ENCODE measurements at regions of chr5 and their contacts with region 1.

Region 1: DNA sequence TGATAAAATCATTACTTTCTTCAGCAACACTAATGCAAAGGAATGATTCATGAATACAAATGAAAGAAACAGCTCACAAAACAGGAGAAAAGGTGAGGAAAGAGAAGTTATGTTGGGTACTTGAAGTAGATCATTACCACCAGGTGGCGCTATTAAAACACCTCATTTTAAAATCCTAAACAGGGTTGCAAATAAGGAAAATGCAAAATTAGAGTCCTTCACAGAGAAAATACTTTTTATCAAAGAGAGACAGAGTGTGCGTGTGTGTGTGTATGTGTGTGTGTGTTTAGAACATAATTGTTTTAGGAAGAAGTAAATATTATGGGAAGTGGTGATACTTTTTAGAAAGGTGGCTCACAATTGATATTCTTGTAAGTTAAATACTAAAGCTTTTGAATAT is 49.5 kb upstream of the CD180 start:
- DNase-seq: peak in 1 of 3 donors; percentile 39
- ATAC-seq: peak; percentile 31 to 39
- H3K4me3 ChIP-seq: no peak overlapping the region
- H3K27ac ChIP-seq: no peak overlapping the region
- H3K4me1 ChIP-seq: peaks cover 9% of the 10 kb centered on the region
- H3K27me3 ChIP-seq: no peaks in the 10 kb centered on the region

Region 2: DNA sequence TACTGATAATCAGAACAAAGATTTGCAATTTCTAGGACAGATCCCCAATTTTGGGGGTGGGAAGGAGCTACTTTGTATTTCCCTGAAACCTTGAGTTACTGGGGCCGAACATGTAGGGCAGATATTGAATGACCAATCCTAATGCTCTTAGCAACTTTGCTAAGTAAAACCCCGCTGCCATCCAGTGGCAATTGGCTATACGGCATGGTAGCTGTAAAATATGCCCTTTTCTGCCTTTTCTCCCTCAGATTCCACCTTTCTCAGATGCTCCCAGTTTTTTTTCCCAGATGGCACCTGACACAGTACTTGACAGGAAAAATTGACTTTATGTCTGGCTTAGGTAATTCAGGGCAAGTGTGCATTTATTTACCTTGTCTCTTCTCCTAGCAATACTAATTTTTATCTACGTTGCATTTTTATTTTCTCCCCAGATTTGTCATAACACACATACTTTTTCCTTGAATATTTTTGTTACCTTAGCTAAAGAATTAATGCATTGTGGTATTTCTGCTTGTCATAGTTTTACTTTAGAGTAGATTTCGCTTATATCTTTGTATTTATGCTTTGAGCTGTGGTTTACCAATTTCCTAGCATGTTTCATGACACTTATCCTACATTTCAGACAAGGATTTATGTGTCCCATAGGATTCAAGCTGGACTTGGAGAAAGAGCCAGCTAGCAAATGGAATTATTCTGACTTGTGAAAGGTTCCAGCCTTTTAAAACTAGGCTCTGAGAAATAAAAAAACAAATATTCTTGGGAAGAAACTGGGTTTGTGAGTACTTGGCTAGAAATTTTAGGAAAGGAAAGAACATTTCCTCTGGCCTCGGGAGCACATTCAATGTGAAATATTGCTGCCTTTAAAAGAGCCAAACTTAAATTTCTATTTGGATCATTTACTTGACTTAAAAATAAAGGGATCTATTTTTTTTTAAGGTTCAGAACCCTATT is 1006.8 kb after region 1 on chr5:
- intact Hi-C with region 1: loop called in 3 of 4 experiments (anchors 5 to 10 kb)
- DNase-seq: peak; percentile 48 to 71 (median 69)
- ATAC-seq: peak; percentile 72 to 85
- H3K4me3 ChIP-seq: peak overlapping the region; percentile 30
- H3K27ac ChIP-seq: peak overlapping the region; percentile 2
- H3K4me1 ChIP-seq: peaks cover 28% of the 10 kb centered on the region
- H3K27me3 ChIP-seq: no peaks in the 10 kb centered on the region

Measured in right cardiac atrium (tissue), 5 donors.